ENCODE measurements at regions of chr21 and their contacts with region 1.

Region 1: DNA sequence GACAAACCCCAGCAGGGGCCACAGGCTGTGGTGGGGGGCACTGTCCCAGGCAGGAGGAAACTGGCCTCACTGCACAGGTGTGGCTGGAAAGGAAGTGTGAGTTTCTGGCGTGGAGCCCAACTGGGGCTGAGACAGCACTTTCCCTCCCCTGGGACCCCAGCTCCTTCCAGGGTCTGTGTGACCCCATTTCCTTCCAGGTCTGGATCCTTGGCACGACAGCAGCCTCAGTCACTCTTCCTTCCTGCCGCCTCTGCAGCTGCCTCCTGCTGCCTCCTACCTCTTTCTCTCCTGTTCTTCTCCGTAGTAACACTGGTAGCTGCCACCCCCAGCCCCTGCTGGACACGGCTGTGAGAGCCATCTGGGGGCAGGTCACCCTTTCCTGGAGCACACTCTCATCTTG is 88.0 kb downstream of the SIK1 start:
- DNase-seq: no peak

Region 2: GRCh38 chr21:42833439-42833815 is 505.5 kb before region 1 on chr21:
- intact Hi-C with region 1: no loop called
- DNase-seq: peak; percentile 76

Region 3: GRCh38 chr21:43369124-43369523 is 30.2 kb after region 1 on chr21:
- intact Hi-C with region 1: loop called in 1 of 2 experiments (anchors 1 kb)
- DNase-seq: no peak